ENCODE measurements at regions of chr2 and their contacts with region 1.

Region 1: GRCh38 chr2:236536727-236537398 is 32.8 kb upstream of the ACKR3 start:
- DNase-seq: peak; percentile 34 to 78
- ATAC-seq: peak; percentile 78 to 87 (median 86)
- H3K4me3 ChIP-seq: peak overlapping the region; percentile 55
- H3K4me3 Mint-ChIP-seq: peak overlapping the region; percentile 95
- H3K27ac ChIP-seq: peak overlapping the region; percentile 74
- H3K27ac Mint-ChIP-seq: peak overlapping the region; percentile 97 to 99
- H3K4me1 ChIP-seq: peaks cover 37% of the 10 kb centered on the region
- H3K4me1 Mint-ChIP-seq: peaks cover 69 to 71% of the 10 kb centered on the region in 2 donors
- H3K27me3 ChIP-seq: no peaks in the 10 kb centered on the region
- H3K27me3 Mint-ChIP-seq: no peaks in the 10 kb centered on the region
- CTCF ChIP-seq: no peak

Region 2: DNA sequence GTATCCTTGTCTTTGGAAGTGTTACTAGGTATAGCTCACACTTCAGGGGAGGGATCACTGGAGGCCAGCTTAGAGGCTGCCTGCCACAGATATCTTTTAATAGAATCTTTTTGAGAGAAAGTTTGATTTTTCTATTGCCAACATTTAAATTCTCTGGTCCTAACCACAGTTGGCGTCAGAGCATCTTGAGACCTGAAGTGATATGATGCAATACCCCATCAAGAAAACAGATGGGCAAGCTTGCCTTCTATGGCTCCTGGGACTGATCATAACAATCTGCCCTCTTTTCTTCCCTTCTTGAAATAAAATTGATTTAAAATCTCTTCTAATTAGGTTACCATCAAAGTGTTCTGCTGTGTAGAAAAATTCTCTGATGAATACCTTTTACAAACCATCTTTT is 72.7 kb before region 1 on chr2:
- intact Hi-C with region 1: no loop called
- DNase-seq: no peak
- ATAC-seq: no peak
- H3K4me3 ChIP-seq: no peak overlapping the region
- H3K4me3 Mint-ChIP-seq: no peak overlapping the region
- H3K27ac ChIP-seq: no peak overlapping the region
- H3K27ac Mint-ChIP-seq: no peak overlapping the region
- H3K4me1 ChIP-seq: no peaks in the 10 kb centered on the region
- H3K4me1 Mint-ChIP-seq: no peaks in the 10 kb centered on the region
- H3K27me3 ChIP-seq: peaks cover 2% of the 10 kb centered on the region
- H3K27me3 Mint-ChIP-seq: peaks cover 19 to 26% of the 10 kb centered on the region in 2 donors
- CTCF ChIP-seq: no peak

Region 3: DNA sequence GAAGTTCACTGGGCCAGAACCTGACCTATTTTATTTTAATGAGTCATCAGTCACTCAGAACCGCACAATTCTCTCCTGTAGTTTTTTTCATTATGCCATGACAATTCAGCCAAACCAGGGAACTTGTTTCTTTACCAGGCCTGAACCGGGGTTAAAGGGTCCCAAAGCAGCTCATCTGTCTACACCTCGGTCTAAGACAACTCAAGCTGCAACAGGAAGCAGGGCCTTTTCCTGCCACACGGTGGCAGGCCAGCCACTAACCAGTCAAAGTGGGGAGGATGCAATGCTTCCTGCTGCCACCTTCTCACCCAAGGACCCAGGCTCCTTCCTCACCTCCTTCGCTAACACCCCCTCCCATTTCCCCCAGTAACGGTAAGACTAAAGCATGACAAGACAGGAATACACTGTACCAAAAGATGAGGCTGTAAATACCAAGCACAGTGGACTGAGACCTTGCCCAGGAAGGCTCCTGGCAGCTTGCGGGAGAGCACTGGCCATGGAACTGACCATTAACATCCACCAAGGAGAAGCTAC is 23.9 kb before region 1 on chr2:
- intact Hi-C with region 1: loop called (anchors 2 kb)
- DNase-seq: peak; percentile 59 to 82
- ATAC-seq: peak; percentile 83 to 99 (median 96)
- H3K4me3 ChIP-seq: no peak overlapping the region
- H3K4me3 Mint-ChIP-seq: no peak overlapping the region
- H3K27ac ChIP-seq: no peak overlapping the region
- H3K27ac Mint-ChIP-seq: no peak overlapping the region
- H3K4me1 ChIP-seq: peaks cover 8% of the 10 kb centered on the region
- H3K4me1 Mint-ChIP-seq: no peaks in the 10 kb centered on the region
- H3K27me3 ChIP-seq: no peaks in the 10 kb centered on the region
- H3K27me3 Mint-ChIP-seq: peaks cover 11 to 16% of the 10 kb centered on the region in 2 donors
- CTCF ChIP-seq: peak; percentile 79

Region 4: DNA sequence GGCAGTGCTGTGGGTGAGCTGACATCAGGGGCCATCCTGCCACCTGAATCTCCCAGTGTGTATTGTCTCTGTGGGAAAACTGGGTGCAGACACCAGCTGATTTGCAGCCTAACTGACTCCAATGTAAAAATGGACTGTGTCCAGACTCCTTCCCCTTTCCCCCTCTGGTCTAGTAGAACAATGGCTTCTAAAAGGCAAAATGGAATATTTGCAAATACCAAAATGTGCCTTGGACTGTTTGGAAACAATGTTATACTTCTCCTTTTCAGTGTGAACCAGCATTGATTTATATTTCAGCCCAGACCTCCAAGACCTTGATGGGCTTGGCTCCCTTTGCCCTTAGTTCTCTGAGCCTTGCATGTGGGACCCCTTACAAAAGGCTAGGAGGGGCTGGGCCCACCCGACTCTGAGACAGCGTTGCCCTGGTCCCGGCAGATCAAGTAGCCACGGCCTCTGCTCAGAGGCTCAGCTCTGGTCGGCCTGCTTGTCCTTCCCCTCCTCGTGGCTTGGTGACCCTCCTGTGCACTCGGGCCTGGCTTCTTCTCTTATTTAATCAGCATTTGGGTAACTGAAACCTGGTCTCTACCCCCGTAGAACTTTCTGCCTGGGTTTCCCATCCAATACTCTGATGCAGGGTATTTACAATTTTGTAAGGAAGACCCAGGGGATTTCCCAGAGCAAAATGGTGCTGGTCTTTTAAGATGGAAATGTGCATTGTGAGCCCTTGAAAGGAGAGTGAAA is 14.8 kb after region 1 on chr2:
- intact Hi-C with region 1: loop called (anchors 2 kb)
- DNase-seq: no peak
- ATAC-seq: no peak
- H3K4me3 ChIP-seq: no peak overlapping the region
- H3K4me3 Mint-ChIP-seq: no peak overlapping the region
- H3K27ac ChIP-seq: peak overlapping the region; percentile 1
- H3K27ac Mint-ChIP-seq: peak overlapping the region; percentile 47 to 76
- H3K4me1 ChIP-seq: peaks cover 71% of the 10 kb centered on the region
- H3K4me1 Mint-ChIP-seq: peaks cover 69 to 92% of the 10 kb centered on the region in 2 donors
- H3K27me3 ChIP-seq: no peaks in the 10 kb centered on the region
- H3K27me3 Mint-ChIP-seq: no peaks in the 10 kb centered on the region
- CTCF ChIP-seq: no peak

Region 5: GRCh38 chr2:236607451-236608187 is 70.8 kb after region 1 on chr2:
- intact Hi-C with region 1: loop called (anchors 2 kb)
- DNase-seq: peak; percentile 56 to 58
- ATAC-seq: peak; percentile 92 to 97 (median 93)
- H3K4me3 ChIP-seq: no peak overlapping the region
- H3K4me3 Mint-ChIP-seq: peak overlapping the region; percentile 90
- H3K27ac ChIP-seq: no peak overlapping the region
- H3K27ac Mint-ChIP-seq: peak overlapping the region; percentile 74 to 78
- H3K4me1 ChIP-seq: peaks cover 36% of the 10 kb centered on the region
- H3K4me1 Mint-ChIP-seq: peaks cover 42 to 53% of the 10 kb centered on the region in 2 donors
- H3K27me3 ChIP-seq: peaks cover 31% of the 10 kb centered on the region
- H3K27me3 Mint-ChIP-seq: peaks cover 55 to 57% of the 10 kb centered on the region in 2 donors
- CTCF ChIP-seq: peak; percentile 40

Measured in natural killer cell (primary cell).